Activated CD4-positive, alpha-beta memory T cell treated with anti-CD3 and anti-CD28 coated beads, Interleukin-2, amount 10 ng/mL, durations not matched to agents 7 days and 5 days (primary cell): ENCODE measurements at regions of chr1 and their contacts with region 1.

Region 1: GRCh38 chr1:226634166-226634588 is 85.6 kb downstream of the STUM start:
- DNase-seq: peak; percentile 81
- H3K4me3 Mint-ChIP-seq: no peak overlapping the region
- H3K27ac Mint-ChIP-seq: peak overlapping the region; percentile 54
- H3K4me1 Mint-ChIP-seq: peaks cover 39% of the 10 kb centered on the region
- H3K27me3 Mint-ChIP-seq: no peaks in the 10 kb centered on the region

Region 2: GRCh38 chr1:226602186-226603021 is 31.8 kb before region 1 on chr1:
- CTCF ChIA-PET with region 1: no interaction called
- POLR2A ChIA-PET with region 1: no interaction called
- DNase-seq: no peak
- H3K4me3 Mint-ChIP-seq: no peak overlapping the region
- H3K27ac Mint-ChIP-seq: no peak overlapping the region
- H3K4me1 Mint-ChIP-seq: no peaks in the 10 kb centered on the region
- H3K27me3 Mint-ChIP-seq: peaks cover 7% of the 10 kb centered on the region

Region 3: DNA sequence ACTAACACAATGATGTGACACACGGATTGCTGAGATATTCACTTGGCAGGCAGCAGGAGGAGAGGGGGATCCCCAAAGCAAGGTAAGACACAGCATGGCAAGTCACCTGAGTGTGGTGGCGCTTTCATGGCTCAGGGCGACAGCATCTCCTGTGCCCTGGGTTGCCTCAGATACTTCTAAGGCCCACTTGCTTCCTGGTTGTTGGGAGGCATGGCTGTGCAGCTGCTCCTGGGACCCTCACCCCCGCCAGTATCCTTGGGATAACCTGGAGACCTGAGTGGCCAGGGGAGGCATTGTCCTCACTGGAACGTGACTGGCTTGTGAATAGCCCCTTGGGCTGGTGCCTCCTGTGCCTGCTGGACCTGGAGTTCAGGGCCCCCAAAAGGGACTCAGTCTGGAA is 15.8 kb before region 1 on chr1:
- CTCF ChIA-PET with region 1: no interaction called
- POLR2A ChIA-PET with region 1: no interaction called
- DNase-seq: no peak
- H3K4me3 Mint-ChIP-seq: no peak overlapping the region
- H3K27ac Mint-ChIP-seq: no peak overlapping the region
- H3K4me1 Mint-ChIP-seq: no peaks in the 10 kb centered on the region
- H3K27me3 Mint-ChIP-seq: peaks cover 4% of the 10 kb centered on the region

Region 4: GRCh38 chr1:226653311-226653921 is 19.2 kb after region 1 on chr1:
- CTCF ChIA-PET with region 1: interaction called, 13 read pairs
- POLR2A ChIA-PET with region 1: interaction called, 8 read pairs
- DNase-seq: peak; percentile 75
- H3K4me3 Mint-ChIP-seq: peak overlapping the region; percentile 56
- H3K27ac Mint-ChIP-seq: peak overlapping the region; percentile 88
- H3K4me1 Mint-ChIP-seq: peaks cover 62% of the 10 kb centered on the region
- H3K27me3 Mint-ChIP-seq: no peaks in the 10 kb centered on the region

Region 5: DNA sequence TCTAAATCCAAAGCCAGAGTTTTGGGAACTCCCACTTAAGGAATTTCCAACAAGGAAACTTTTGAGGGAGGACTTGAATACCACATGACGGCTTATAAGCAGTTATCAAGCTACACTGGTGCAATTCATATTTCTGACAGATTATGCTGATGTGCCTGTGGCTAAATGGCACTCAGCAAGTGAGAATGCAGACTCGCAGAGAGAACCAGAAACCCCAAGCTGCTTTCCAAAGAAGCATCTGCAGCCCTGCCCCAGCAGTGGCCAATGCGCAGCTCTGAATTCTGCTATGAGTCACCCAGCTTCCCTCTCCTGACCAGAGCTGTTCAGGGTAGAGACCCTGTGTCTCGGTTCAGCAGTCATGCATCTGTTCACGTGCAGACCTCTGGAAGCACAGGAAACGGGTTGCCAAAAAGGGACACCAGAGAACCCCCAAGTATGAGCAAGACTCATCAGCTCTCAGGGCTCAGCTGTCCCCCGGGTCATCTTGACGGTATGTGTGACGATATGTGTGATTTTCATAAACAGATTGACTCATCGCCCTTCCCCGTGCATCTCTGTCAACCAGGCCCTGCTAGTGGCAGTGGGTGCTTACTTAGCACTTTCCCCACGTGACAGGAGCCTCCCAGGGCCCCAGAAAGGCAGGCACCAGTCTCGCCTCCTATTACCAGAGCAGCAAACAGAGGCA is 28.6 kb after region 1 on chr1:
- CTCF ChIA-PET with region 1: interaction called, 12 read pairs
- POLR2A ChIA-PET with region 1: interaction called, 6 read pairs
- DNase-seq: peak; percentile 89
- H3K4me3 Mint-ChIP-seq: peak overlapping the region; percentile 57
- H3K27ac Mint-ChIP-seq: peak overlapping the region; percentile 92
- H3K4me1 Mint-ChIP-seq: peaks cover 86% of the 10 kb centered on the region
- H3K27me3 Mint-ChIP-seq: no peaks in the 10 kb centered on the region

Region 6: DNA sequence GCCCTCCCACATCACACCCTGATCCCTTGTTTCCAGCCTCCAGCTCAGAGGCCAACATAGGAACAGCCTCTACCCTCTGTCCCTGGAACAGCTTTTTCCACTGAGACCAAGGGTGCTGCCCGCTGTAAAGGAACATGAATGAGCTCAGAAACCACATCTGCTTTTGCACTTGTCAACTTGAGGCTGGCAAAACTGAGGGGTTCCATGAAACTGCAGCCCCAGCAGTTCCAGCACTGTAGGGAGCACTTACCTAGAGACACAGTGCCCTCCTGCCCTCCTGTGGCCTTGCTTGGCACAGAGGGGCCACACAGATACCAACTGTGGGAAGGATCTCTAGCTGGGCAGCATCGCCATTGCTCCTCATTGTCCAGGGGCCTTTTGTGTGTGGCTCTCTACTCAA is 53.2 kb after region 1 on chr1:
- CTCF ChIA-PET with region 1: interaction called, 42 read pairs
- POLR2A ChIA-PET with region 1: interaction called, 5 read pairs
- DNase-seq: peak; percentile 47
- H3K4me3 Mint-ChIP-seq: no peak overlapping the region
- H3K27ac Mint-ChIP-seq: no peak overlapping the region
- H3K4me1 Mint-ChIP-seq: peaks cover 87% of the 10 kb centered on the region
- H3K27me3 Mint-ChIP-seq: no peaks in the 10 kb centered on the region

Region 7: DNA sequence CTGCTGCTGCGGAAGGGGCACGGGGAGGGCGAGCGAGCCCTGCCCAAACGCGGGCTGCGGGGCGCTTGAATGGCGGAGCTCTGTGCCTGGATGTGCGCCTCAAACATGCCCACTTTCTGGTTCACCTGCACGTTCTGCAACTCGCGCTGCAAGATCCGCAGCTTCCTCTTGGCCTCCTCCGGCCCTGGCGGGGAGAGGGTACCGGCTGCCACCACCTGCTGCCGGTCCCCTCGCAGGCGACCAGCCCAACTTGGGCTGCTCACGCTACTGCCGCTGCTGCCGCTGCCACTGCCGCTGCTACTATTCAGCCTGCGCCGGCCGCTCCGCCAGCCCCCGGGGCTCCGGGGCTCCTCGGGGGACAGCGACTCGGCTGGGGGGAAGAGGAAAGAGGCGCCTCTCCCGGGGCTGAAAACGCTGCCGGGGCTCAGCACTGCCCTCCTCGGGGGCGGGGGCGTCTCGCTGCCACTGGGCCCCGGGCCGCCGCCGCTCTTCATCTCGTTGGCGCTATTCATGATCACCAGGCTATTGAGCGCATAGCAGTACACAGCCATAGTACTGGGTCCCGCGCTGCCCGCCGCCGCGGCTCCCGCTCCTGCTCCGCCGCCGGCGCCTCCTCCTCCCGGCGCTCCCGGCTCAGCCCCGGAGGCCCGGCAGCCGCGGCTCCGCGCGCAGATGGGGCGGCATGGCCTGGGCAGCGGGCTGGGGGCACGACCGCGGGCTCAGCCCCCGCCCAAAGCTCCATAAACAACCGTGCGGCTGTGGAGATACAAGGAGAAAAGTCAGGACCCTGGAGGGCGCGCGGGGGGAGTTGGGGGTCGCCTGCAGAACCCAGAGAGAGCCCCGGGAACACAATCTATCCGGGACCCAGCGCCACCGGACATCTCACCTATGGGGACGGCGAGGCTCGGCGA is 103.0 kb after region 1 on chr1:
- CTCF ChIA-PET with region 1: interaction called, 11 read pairs
- POLR2A ChIA-PET with region 1: interaction called, 5 read pairs
- DNase-seq: peak; percentile 62
- H3K4me3 Mint-ChIP-seq: peak overlapping the region; percentile 87
- H3K27ac Mint-ChIP-seq: peak overlapping the region; percentile 92
- H3K4me1 Mint-ChIP-seq: peaks cover 57% of the 10 kb centered on the region
- H3K27me3 Mint-ChIP-seq: no peaks in the 10 kb centered on the region

Region 8: DNA sequence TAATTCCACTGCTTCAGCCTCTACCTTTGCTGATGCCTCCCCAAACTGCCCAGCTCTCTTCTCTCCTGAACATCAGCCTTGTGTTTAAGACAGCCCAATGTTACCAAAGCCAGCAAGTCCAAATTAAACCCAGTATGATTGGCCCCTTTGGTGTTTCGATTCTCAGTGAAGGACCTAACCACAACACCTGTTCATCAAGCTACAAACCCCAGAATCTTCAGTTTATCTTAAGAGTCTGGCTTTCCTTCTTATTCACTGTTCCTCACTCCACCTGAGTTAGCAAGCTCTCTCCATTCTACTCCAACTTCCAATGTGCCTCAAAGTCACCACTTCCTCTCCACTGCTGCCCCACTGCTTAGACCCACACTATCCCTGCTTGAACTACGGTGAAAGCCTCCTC is 130.4 kb after region 1 on chr1:
- CTCF ChIA-PET with region 1: no interaction called
- POLR2A ChIA-PET with region 1: no interaction called
- DNase-seq: no peak
- H3K4me3 Mint-ChIP-seq: no peak overlapping the region
- H3K27ac Mint-ChIP-seq: peak overlapping the region; percentile 41
- H3K4me1 Mint-ChIP-seq: peaks cover 28% of the 10 kb centered on the region
- H3K27me3 Mint-ChIP-seq: peaks cover 12% of the 10 kb centered on the region

Region 9: DNA sequence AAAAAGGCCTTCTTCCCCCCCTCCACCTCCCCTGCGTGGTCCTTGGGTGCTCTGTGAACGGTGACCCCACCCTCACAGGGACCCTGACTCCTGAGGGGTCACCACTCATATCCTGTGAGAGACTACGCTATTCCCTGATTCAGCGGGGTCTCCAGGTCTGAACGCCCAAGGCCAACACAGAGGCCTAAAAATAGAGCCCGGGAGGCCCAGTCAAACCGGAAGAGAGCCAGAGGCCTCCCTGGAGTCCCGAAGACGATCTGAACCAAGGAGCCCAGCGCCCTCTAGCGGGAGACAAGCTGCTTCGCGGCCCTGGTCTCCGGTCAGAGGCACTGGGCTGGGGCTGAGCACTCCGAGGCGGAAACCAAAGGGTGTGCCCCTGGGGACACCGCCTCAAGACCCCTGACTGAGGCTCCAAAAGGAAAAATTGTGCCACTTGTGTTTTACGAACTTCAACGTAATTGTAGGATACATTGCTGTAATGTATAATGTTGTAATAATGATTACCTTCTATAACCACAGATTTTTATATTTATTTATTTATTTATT is 193.9 kb after region 1 on chr1:
- CTCF ChIA-PET with region 1: interaction called, 77 read pairs
- POLR2A ChIA-PET with region 1: interaction called, 19 read pairs
- DNase-seq: peak; percentile 96
- H3K4me3 Mint-ChIP-seq: peak overlapping the region; percentile 25
- H3K27ac Mint-ChIP-seq: peak overlapping the region; percentile 80
- H3K4me1 Mint-ChIP-seq: peaks cover 14% of the 10 kb centered on the region
- H3K27me3 Mint-ChIP-seq: peaks cover 4% of the 10 kb centered on the region